CD8-positive, alpha-beta T cell (primary cell): ENCODE measurements at regions of chr21 and their contacts with region 1.

Region 1: DNA sequence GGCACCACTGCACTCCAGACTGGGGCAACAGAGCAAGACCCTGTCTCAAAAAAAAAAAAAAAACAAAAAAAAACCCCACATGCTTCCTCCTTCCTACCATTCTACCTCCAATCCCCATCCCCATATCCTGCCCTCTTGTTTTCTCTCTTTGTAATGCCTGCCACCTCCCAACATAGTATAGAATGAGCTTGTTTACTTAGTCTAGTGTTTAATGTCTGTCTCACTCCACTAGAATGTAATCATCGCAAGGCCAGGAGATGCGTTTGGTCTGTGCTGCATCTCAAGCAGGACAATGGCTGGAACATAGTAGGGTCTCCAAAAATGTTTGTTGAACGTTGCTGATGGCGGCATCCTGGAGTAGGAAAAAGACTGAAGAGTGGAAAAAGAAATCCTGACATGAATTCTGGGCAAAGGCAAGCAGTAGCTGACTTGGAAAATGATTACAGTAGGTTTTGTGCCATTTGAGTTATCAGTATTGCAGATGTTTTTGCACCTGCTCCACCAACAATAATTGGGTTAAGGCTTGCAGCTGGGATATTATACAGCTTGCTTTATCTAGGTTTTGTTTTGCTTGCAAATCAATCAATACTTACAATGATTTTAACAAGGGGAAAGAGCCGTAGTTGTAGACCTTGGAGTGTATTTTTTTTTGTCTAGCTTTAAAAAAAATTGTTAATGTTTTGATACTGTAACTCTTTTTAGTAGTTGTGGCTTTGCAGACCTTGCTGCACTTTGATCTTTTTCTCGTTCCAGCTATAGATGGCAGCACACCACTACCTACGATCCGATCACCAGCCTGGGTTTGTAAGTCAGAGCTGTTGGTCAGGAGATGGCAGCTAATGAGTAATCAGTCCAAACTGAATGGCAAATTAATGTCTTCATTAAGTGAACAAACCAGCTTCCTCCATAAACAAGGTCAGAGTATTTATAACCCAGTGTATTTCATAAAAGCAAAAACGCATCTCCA is 62.4 kb downstream of the BACH1 start:
- DNase-seq: peak in 2 of 9 experiments; percentile 18 to 40
- ATAC-seq: no peak
- H3K4me3 ChIP-seq: no peak overlapping the region
- H3K4me3 Mint-ChIP-seq: no peak overlapping the region
- H3K27ac ChIP-seq: no peak overlapping the region
- H3K27ac Mint-ChIP-seq: peak overlapping the region; percentile 11
- H3K4me1 ChIP-seq: no peaks in the 10 kb centered on the region
- H3K4me1 Mint-ChIP-seq: peaks cover 18% of the 10 kb centered on the region
- H3K27me3 ChIP-seq: no peaks in the 10 kb centered on the region
- H3K27me3 Mint-ChIP-seq: no peaks in the 10 kb centered on the region
- CTCF ChIP-seq: peak; percentile 38

Region 2: DNA sequence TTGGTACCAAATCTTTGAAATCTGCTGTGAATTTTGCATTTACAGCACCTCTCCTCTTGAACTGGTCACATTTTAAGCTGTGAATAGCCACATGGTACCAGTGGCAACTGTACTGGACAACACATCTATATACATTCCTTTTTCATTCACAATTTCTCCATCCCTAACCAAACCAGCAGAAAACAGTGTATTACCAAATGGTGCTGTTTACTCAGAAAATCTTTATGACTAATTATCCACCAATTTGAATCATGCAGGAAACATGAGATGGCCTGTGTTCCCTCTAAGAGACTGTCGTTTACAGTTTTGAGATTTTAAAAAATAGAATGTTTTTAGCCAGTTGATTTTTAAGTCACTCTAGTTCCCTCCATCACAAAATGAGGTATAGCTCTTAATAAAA is 270.1 kb before region 1 on chr21:
- CTCF ChIA-PET with region 1: interaction called, 10 read pairs
- POLR2A ChIA-PET with region 1: no interaction called
- intact Hi-C with region 1: no loop called
- DNase-seq: no peak
- ATAC-seq: no peak
- H3K4me3 ChIP-seq: no peak overlapping the region
- H3K4me3 Mint-ChIP-seq: no peak overlapping the region
- H3K27ac ChIP-seq: no peak overlapping the region
- H3K27ac Mint-ChIP-seq: no peak overlapping the region
- H3K4me1 ChIP-seq: no peaks in the 10 kb centered on the region
- H3K4me1 Mint-ChIP-seq: no peaks in the 10 kb centered on the region
- H3K27me3 ChIP-seq: no peaks in the 10 kb centered on the region
- H3K27me3 Mint-ChIP-seq: no peaks in the 10 kb centered on the region
- CTCF ChIP-seq: no peak

Region 3: DNA sequence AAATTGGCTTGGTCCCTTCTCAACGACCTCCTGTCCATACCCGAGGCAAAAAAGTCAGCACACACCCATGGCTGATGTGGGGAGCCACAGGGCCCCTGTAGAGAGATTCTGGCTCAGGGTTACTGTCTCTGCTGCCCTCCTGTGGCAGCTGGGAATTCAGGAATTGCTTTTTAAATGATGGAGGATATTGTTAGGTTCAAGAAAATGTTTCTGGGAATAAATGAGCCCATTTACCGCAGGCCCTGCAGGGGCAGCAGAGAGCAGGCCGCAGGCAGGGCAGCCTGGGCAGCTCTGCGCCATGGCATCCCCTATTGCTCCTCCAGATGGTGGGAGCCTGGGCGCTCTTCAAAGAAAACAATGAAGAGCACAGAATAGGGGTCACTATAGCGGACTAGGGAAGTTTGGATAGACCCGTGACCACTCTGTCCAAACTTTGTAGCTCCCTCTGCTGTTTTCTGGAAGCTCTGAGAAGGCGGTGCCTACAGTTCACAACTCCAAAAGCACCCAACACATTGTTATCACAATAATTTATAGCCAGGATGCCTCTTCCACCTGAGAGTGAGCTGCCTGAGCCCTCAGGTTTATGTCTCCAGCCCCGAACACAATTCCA is 138.8 kb after region 1 on chr21:
- CTCF ChIA-PET with region 1: interaction called, 5 read pairs
- POLR2A ChIA-PET with region 1: no interaction called
- intact Hi-C with region 1: loop called in 1 of 2 experiments (anchors 2 kb)
- DNase-seq: no peak
- ATAC-seq: no peak
- H3K4me3 ChIP-seq: no peak overlapping the region
- H3K4me3 Mint-ChIP-seq: no peak overlapping the region
- H3K27ac ChIP-seq: no peak overlapping the region
- H3K27ac Mint-ChIP-seq: peak overlapping the region; percentile 37
- H3K4me1 ChIP-seq: no peaks in the 10 kb centered on the region
- H3K4me1 Mint-ChIP-seq: peaks cover 12% of the 10 kb centered on the region
- H3K27me3 ChIP-seq: no peaks in the 10 kb centered on the region
- H3K27me3 Mint-ChIP-seq: no peaks in the 10 kb centered on the region
- CTCF ChIP-seq: no peak